PC-3 (cell line): ENCODE measurements at regions of chr4 and their contacts with region 1.

Region 1: DNA sequence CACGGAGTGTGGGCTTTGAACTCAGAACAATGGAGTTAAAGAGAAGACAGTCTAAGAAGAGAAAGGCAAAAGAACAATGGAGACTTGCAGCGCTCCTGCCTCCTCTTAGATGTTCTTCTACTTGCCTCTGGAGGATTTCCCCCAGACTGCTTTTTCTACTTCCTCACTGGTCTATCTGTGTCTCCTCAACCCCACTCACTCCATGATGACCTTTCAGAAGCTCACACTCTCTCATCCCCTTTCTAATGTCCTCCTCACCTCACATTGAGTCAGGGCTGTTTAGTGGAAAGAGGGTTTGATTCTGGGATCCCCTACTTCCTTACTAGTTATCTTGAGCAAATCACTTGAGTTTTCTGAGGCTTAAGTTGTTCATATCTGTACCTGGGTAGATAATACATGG is 12.2 kb upstream of the HERC6 start:
- DNase-seq: no peak
- ATAC-seq: no peak
- H3K4me3 ChIP-seq: no peak overlapping the region
- H3K27ac ChIP-seq: no peak overlapping the region
- H3K4me1 ChIP-seq: no peaks in the 10 kb centered on the region
- H3K27me3 ChIP-seq: no peaks in the 10 kb centered on the region
- CTCF ChIP-seq: no peak

Region 2: GRCh38 chr4:88217920-88218319 is 148.5 kb before region 1 on chr4:
- CTCF ChIA-PET with region 1: no interaction called
- POLR2A ChIA-PET with region 1: no interaction called
- intact Hi-C with region 1: loop called (anchors 2 kb)
- DNase-seq: no peak
- ATAC-seq: no peak
- H3K4me3 ChIP-seq: no peak overlapping the region
- H3K27ac ChIP-seq: no peak overlapping the region
- H3K4me1 ChIP-seq: no peaks in the 10 kb centered on the region; the same call in 1 of the 2 replicates
- H3K27me3 ChIP-seq: no peaks in the 10 kb centered on the region
- CTCF ChIP-seq: no peak

Region 3: GRCh38 chr4:88318861-88319344 is 47.6 kb before region 1 on chr4:
- CTCF ChIA-PET with region 1: no interaction called
- POLR2A ChIA-PET with region 1: no interaction called
- intact Hi-C with region 1: loop called (anchors 5 kb)
- DNase-seq: peak; percentile 93
- ATAC-seq: peak; percentile 82
- H3K4me3 ChIP-seq: peak overlapping the region; percentile 32; the same call in 1 of the 2 replicates
- H3K27ac ChIP-seq: peak overlapping the region; percentile 93
- H3K4me1 ChIP-seq: peaks cover 34% of the 10 kb centered on the region
- H3K27me3 ChIP-seq: no peaks in the 10 kb centered on the region
- CTCF ChIP-seq: no peak